SK-N-SH (cell line): ENCODE measurements at regions of chr18 and their contacts with region 1.

Region 1: GRCh38 chr18:59070181-59070912 is 69.3 kb upstream of the SEC11C start:
- DNase-seq: peak; percentile 75
- H3K4me3 ChIP-seq: peak overlapping the region in 1 of 2 experiments; percentile 17; a peak in 1 of 4 replicates
- H3K27ac ChIP-seq: no peak overlapping the region
- H3K4me1 ChIP-seq: peaks cover 0 to 2% of the 10 kb centered on the region in 2 experiments; a peak in 1 of 4 replicates
- H3K27me3 ChIP-seq: no peaks in the 10 kb centered on the region
- CTCF ChIP-seq: peak; percentile 89
- EP300 ChIP-seq: no peak
- RAD21 ChIP-seq: peak; percentile 87

Region 2: DNA sequence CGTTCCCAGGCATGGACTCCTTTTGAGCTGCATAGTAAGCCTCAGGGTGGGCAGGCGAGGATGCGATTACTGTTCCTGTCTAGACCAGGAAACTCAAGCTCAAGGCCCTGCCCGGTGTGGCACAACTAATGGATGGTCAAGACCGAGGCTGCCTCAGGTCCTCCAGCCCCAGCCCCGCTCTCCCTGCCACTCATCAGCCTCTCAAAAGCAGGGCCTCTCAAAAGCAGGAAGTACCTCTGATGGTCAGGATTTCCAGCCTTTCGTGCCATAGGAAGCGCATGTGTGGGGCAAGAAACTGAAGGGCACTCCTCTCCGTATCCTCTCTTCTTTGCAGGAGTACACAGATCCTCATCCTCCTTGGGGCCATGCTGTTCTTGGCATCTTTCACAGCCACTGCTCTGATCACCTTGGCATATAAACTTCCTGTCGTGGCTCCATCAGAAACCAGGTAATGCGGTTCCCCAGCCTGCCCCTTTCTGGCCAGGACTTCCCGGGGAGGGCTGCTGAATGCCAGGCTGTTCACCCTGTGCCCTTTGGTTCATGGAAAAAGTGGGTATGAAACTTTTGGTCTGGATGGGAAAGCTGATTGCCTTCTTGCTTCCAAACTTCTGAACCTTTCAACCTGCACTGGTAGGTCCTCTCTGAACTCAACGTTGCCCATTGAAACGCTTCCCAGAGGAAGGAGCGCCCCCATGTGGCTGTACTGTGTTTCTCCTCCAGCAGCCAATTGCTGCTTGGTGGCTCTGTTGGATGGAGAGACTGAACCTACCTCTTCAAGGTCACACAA is 13.4 kb before region 1 on chr18:
- CTCF ChIA-PET with region 1: interaction called, 45 read pairs
- POLR2A ChIA-PET with region 1: no interaction called
- DNase-seq: peak; percentile 54
- H3K4me3 ChIP-seq: no peak overlapping the region
- H3K27ac ChIP-seq: no peak overlapping the region
- H3K4me1 ChIP-seq: peaks cover 0 to 13% of the 10 kb centered on the region in 2 experiments; a peak in 2 of 4 replicates
- H3K27me3 ChIP-seq: no peaks in the 10 kb centered on the region
- CTCF ChIP-seq: peak; percentile 87
- EP300 ChIP-seq: no peak
- RAD21 ChIP-seq: peak; percentile 90